Tibial artery (tissue), 4 donors: ENCODE measurements at regions of chr1 and their contacts with region 1.

Region 1: GRCh38 chr1:169348383-169349036 is 19.1 kb downstream of the NME7 start:
- DNase-seq: no peak
- H3K4me3 ChIP-seq: no peak overlapping the region
- H3K27ac ChIP-seq: no peak overlapping the region
- H3K4me1 ChIP-seq: no peaks in the 10 kb centered on the region
- H3K27me3 ChIP-seq: no peaks in the 10 kb centered on the region
- CTCF ChIP-seq: peak; percentile 73 to 81

Region 2: GRCh38 chr1:168342572-168343280 is 1005.8 kb before region 1 on chr1:
- intact Hi-C with region 1: loop called (anchors 5 kb)
- DNase-seq: peak; percentile 91 to 94
- H3K4me3 ChIP-seq: peak overlapping the region; percentile 30 to 44
- H3K27ac ChIP-seq: peak overlapping the region; percentile 67 to 76
- H3K4me1 ChIP-seq: peaks cover 0 to 17% (median 7%) of the 10 kb centered on the region in 4 donors
- H3K27me3 ChIP-seq: no peaks in the 10 kb centered on the region
- CTCF ChIP-seq: peak; percentile 71 to 86

Region 3: DNA sequence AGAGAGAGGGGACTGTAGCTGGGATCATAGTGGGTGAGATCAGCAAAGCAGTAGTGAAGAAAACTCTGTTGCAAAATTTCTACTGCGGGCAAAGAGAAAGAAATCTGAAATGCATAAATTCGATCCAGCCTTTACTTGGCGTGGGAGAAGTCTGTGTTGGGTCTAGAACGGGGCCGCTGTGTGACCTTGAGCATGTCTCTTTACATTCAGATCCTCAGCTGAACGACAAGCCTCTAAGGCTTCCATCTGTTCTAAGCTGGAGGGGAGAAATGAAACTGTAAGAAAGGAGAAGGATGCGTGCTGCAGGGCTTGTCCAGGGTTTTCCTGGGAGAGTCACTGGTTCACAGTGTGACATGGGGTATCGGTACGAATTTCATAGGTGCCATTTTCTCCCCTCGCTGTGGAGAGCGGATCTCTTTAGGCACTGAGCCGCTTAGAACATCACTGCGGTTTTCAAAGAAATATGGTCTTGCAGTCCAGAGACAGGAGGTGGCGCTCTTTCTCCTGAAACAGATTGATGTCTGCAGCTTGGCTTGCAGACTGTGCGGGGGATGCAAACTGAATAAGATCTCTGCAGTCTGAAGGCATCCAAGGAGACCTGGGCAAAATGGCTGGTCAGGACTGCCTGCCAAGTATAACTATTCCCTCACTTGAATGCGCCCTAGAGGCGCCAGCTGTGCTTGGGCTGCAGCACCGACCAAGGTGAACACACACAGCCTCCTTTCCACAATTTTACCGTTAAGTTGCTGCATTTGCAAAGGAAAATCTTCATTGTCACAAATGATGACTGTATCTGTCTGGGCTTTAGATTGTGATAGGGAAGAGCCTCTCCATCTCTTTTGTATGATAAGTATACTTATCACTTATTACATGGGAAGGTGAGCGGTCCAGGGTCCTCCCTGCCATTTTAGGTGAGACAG is 908.8 kb before region 1 on chr1:
- intact Hi-C with region 1: loop called (anchors 10 kb)
- DNase-seq: peak; percentile 72 to 77
- H3K4me3 ChIP-seq: peak overlapping the region in 1 of 2 donors; percentile 11
- H3K27ac ChIP-seq: no peak overlapping the region
- H3K4me1 ChIP-seq: peaks cover 0 to 6% (median 0%) of the 10 kb centered on the region in 4 donors
- H3K27me3 ChIP-seq: peaks cover 0 to 5% of the 10 kb centered on the region in 2 donors
- CTCF ChIP-seq: peak; percentile 65

Region 4: GRCh38 chr1:168603501-168604110 is 744.9 kb before region 1 on chr1:
- intact Hi-C with region 1: loop called (anchors 5 kb)
- DNase-seq: peak; percentile 74 to 83
- H3K4me3 ChIP-seq: no peak overlapping the region
- H3K27ac ChIP-seq: no peak overlapping the region
- H3K4me1 ChIP-seq: peaks cover 0 to 13% (median 9%) of the 10 kb centered on the region in 4 donors
- H3K27me3 ChIP-seq: peaks cover 0 to 8% of the 10 kb centered on the region in 2 donors
- CTCF ChIP-seq: peak; percentile 69 to 73

Region 5: GRCh38 chr1:169427081-169427641 is 78.7 kb after region 1 on chr1 and contains the start of gene CCDC181:
- intact Hi-C with region 1: no loop called
- DNase-seq: peak in 1 of 2 donors; percentile 27
- H3K4me3 ChIP-seq: peak within 1 kb of the TSS; percentile 41 to 51
- H3K27ac ChIP-seq: no peak within 1 kb of the TSS
- H3K4me1 ChIP-seq: peaks cover 0 to 12% (median 6%) of the 10 kb centered on the region in 4 donors
- H3K27me3 ChIP-seq: no peaks in the 10 kb centered on the region
- CTCF ChIP-seq: no peak

Region 6: GRCh38 chr1:169514566-169515270 is 166.2 kb after region 1 on chr1:
- intact Hi-C with region 1: no loop called
- DNase-seq: no peak
- H3K4me3 ChIP-seq: no peak overlapping the region
- H3K27ac ChIP-seq: no peak overlapping the region
- H3K4me1 ChIP-seq: peaks cover 0 to 27% (median 9%) of the 10 kb centered on the region in 4 donors
- H3K27me3 ChIP-seq: no peaks in the 10 kb centered on the region
- CTCF ChIP-seq: no peak